ENCODE measurements at regions of chr3 and their contacts with region 1.

Region 1: GRCh38 chr3:42749753-42750231 is 23.3 kb downstream of the CCDC13 start:
- DNase-seq: no peak
- ATAC-seq: peak in 7 of 8 donors; percentile 4 to 51 (median 34)
- H3K4me3 ChIP-seq: no peak overlapping the region
- H3K27ac ChIP-seq: peak overlapping the region in 1 of 10 donors; percentile 21
- H3K4me1 ChIP-seq: peaks cover 0 to 28% (median 12%) of the 10 kb centered on the region in 9 donors
- H3K27me3 ChIP-seq: no peaks in the 10 kb centered on the region
- CTCF ChIP-seq: peak; percentile 12 to 60 (median 39)

Region 2: GRCh38 chr3:42572278-42572677 is 177.5 kb before region 1 on chr3:
- intact Hi-C with region 1: loop called in 3 of 10 experiments (anchors 5 kb)
- DNase-seq: peak in 1 of 2 donors; percentile 10
- ATAC-seq: peak; percentile 43 to 87 (median 76)
- H3K4me3 ChIP-seq: no peak overlapping the region
- H3K27ac ChIP-seq: no peak overlapping the region
- H3K4me1 ChIP-seq: peaks cover 0 to 5% (median 0%) of the 10 kb centered on the region in 9 donors
- H3K27me3 ChIP-seq: no peaks in the 10 kb centered on the region
- CTCF ChIP-seq: peak in 7 of 9 donors; percentile 24 to 59 (median 50)

Region 3: GRCh38 chr3:42581709-42582473 is 167.9 kb before region 1 on chr3 and contains the start of gene SEC22C:
- intact Hi-C with region 1: loop called in 6 of 10 experiments (anchors 2 to 5 kb)
- DNase-seq: peak; percentile 95
- ATAC-seq: peak; percentile 97 to 99 (median 99)
- H3K4me3 ChIP-seq: peak within 1 kb of the TSS; percentile 75 to 97 (median 88)
- H3K27ac ChIP-seq: peak within 1 kb of the TSS; percentile 62 to 95 (median 88)
- H3K4me1 ChIP-seq: peaks cover 0 to 26% (median 21%) of the 10 kb centered on the region in 9 donors
- H3K27me3 ChIP-seq: no peaks in the 10 kb centered on the region
- CTCF ChIP-seq: peak in 7 of 9 donors; percentile 13 to 59 (median 39)
- total RNA-seq, gene SEC22C: 23.8 to 32.9 (median 26.4) TPM

Region 4: DNA sequence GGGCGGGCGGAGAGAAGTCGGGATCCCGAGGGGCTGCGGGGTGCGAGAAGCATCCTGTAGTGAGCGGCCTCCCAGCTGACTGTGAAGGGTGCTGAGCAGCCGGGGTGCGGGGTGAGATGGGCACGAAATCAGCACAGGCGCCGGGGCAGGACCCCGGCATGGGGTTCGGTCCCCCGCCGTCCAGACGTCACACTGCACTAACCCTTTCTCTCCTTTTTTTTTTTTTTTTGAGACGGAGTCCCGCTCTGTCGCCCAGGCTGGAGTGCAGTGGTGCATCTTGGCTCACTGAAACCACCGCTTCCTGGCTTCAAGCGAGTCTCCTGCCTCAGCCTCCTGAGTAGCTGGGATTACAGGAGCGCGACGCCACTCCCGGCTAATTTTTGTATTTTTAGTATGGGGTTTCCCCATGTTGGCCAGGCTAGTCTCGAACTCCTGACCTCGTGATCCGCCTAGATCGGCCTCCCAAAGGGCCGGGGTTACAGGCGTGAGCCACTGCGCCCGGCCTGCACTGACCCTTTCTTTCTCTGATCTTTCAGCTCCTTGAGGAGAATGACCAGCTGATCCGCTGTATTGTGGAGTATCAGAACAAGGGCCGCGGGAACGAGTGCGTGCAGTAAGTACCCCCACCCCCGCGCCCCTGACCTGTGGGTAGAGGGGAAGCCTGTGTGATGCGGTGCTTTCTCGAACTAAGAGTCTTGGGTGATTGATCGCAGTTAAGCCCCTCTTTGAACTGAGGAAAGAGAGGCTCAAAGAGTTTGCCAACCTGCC is 158.6 kb before region 1 on chr3:
- intact Hi-C with region 1: loop called in 1 of 10 experiments (anchors 5 kb)
- DNase-seq: peak in 1 of 2 donors; percentile 11
- ATAC-seq: peak in 6 of 8 donors; percentile 16 to 71 (median 34)
- H3K4me3 ChIP-seq: peak overlapping the region; percentile 56 to 88 (median 71)
- H3K27ac ChIP-seq: peak overlapping the region in 9 of 10 donors; percentile 75 to 87 (median 83)
- H3K4me1 ChIP-seq: peaks cover 0 to 24% (median 9%) of the 10 kb centered on the region in 9 donors
- H3K27me3 ChIP-seq: no peaks in the 10 kb centered on the region
- CTCF ChIP-seq: no peak

Region 5: GRCh38 chr3:42701142-42702065 is 48.4 kb before region 1 on chr3:
- intact Hi-C with region 1: loop called in 4 of 10 experiments (anchors 1 to 5 kb)
- DNase-seq: peak; percentile 82 to 86
- ATAC-seq: peak; percentile 67 to 87 (median 82)
- H3K4me3 ChIP-seq: peak overlapping the region; percentile 35 to 64 (median 52)
- H3K27ac ChIP-seq: peak overlapping the region; percentile 85 to 99 (median 96)
- H3K4me1 ChIP-seq: peaks cover 0 to 70% (median 27%) of the 10 kb centered on the region in 9 donors
- H3K27me3 ChIP-seq: no peaks in the 10 kb centered on the region
- CTCF ChIP-seq: peak in 1 of 9 donors; percentile 24

Measured in heart right ventricle (tissue), 16 donors.